CD8-positive, alpha-beta T cell (primary cell): ENCODE measurements at regions of chr5 and their contacts with region 1.

Region 1: DNA sequence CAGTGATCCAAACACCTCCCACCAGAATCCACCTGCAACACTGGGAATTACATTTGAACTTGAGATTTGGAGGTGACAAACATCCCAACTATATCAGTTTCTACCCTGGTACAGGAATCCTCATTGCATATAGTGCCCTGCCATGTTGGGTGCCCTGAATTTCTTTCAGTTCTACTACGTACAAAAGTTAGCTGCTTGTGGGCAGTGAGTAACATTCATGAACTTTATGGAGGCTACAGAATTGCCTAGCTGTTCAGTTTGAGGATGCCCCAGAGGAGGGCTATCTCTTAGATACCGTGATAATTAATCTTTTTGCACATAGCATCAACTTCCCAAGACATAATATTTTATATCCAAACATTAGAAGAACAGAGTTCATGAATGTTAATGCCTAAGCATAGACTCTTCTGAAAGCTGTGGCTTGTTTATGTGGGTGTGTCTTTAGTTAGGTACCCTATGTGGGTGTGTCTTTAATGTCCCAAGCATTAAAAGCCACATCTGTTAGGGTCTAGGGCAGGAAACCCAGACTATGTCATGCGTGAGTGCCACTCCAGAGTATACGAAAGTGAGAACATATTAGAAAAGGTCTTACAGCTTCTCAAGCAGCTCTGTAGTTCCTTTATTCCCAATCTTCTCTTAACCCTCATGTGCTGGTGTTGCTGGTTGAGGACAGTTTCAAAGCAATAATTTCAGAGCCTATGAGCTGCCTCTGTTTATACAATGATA is 47.0 kb upstream of the CHD1 start:
- DNase-seq: peak in 2 of 9 experiments; percentile 4 to 14
- ATAC-seq: peak; percentile 57
- H3K4me3 ChIP-seq: no peak overlapping the region
- H3K4me3 Mint-ChIP-seq: no peak overlapping the region
- H3K27ac ChIP-seq: no peak overlapping the region
- H3K27ac Mint-ChIP-seq: no peak overlapping the region
- H3K4me1 ChIP-seq: peaks cover 13% of the 10 kb centered on the region
- H3K4me1 Mint-ChIP-seq: peaks cover 18% of the 10 kb centered on the region
- H3K27me3 ChIP-seq: no peaks in the 10 kb centered on the region
- H3K27me3 Mint-ChIP-seq: no peaks in the 10 kb centered on the region
- CTCF ChIP-seq: no peak

Region 2: GRCh38 chr5:98989727-98990126 is 13.9 kb after region 1 on chr5:
- CTCF ChIA-PET with region 1: no interaction called
- POLR2A ChIA-PET with region 1: no interaction called
- intact Hi-C with region 1: loop called in 1 of 2 experiments (anchors 2 kb)
- DNase-seq: peak in 1 of 9 experiments; percentile 14
- ATAC-seq: no peak
- H3K4me3 ChIP-seq: no peak overlapping the region
- H3K4me3 Mint-ChIP-seq: no peak overlapping the region
- H3K27ac ChIP-seq: no peak overlapping the region
- H3K27ac Mint-ChIP-seq: no peak overlapping the region
- H3K4me1 ChIP-seq: no peaks in the 10 kb centered on the region
- H3K4me1 Mint-ChIP-seq: peaks cover 19% of the 10 kb centered on the region
- H3K27me3 ChIP-seq: peaks cover 0 to 2% of the 10 kb centered on the region in 2 experiments
- H3K27me3 Mint-ChIP-seq: no peaks in the 10 kb centered on the region
- CTCF ChIP-seq: no peak

Region 3: DNA sequence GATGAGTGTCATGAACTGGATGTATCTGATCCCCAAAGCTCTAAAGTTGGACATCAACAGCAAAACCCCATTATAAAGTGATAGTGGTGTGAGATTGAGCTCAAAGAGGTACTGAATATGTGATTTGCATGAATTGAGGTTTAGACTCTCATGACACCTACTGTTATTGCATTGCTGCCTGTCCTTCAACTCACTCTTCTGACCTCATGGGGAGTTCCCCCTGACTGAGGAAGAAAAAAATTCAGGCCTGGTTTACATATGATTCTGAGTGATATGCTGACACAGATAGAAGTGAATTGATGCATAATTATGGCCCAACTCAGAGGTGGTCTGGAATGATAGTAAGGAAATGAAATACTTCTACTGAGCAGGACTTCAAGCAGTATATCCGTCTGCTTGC is 29.1 kb after region 1 on chr5:
- CTCF ChIA-PET with region 1: no interaction called
- POLR2A ChIA-PET with region 1: no interaction called
- intact Hi-C with region 1: loop called in 1 of 2 experiments (anchors 5 kb)
- DNase-seq: peak in 4 of 9 experiments; percentile 8 to 72 (median 48)
- ATAC-seq: peak; percentile 99
- H3K4me3 ChIP-seq: no peak overlapping the region
- H3K4me3 Mint-ChIP-seq: no peak overlapping the region
- H3K27ac ChIP-seq: no peak overlapping the region
- H3K27ac Mint-ChIP-seq: peak overlapping the region; percentile 56
- H3K4me1 ChIP-seq: no peaks in the 10 kb centered on the region
- H3K4me1 Mint-ChIP-seq: peaks cover 19% of the 10 kb centered on the region
- H3K27me3 ChIP-seq: no peaks in the 10 kb centered on the region
- H3K27me3 Mint-ChIP-seq: no peaks in the 10 kb centered on the region
- CTCF ChIP-seq: no peak